RWPE1 (cell line): ENCODE measurements at regions of chr5 and their contacts with region 1.

Region 1: GRCh38 chr5:53507013-53507412 is 26.6 kb downstream of the FST start:
- DNase-seq: no peak
- H3K27ac ChIP-seq: no peak overlapping the region
- CTCF ChIP-seq: no peak

Region 2: GRCh38 chr5:53180991-53181390 is 326.0 kb before region 1 on chr5:
- CTCF ChIA-PET with region 1: interaction called, 11 read pairs
- POLR2A ChIA-PET with region 1: no interaction called
- DNase-seq: no peak
- H3K27ac ChIP-seq: no peak overlapping the region
- CTCF ChIP-seq: no peak

Region 3: GRCh38 chr5:53520813-53521212 is 13.8 kb after region 1 on chr5:
- CTCF ChIA-PET with region 1: no interaction called
- POLR2A ChIA-PET with region 1: no interaction called
- DNase-seq: no peak
- H3K27ac ChIP-seq: no peak overlapping the region
- CTCF ChIP-seq: no peak